Mammary epithelial cell (primary cell): ENCODE measurements at regions of chr5 and their contacts with region 1.

Region 1: DNA sequence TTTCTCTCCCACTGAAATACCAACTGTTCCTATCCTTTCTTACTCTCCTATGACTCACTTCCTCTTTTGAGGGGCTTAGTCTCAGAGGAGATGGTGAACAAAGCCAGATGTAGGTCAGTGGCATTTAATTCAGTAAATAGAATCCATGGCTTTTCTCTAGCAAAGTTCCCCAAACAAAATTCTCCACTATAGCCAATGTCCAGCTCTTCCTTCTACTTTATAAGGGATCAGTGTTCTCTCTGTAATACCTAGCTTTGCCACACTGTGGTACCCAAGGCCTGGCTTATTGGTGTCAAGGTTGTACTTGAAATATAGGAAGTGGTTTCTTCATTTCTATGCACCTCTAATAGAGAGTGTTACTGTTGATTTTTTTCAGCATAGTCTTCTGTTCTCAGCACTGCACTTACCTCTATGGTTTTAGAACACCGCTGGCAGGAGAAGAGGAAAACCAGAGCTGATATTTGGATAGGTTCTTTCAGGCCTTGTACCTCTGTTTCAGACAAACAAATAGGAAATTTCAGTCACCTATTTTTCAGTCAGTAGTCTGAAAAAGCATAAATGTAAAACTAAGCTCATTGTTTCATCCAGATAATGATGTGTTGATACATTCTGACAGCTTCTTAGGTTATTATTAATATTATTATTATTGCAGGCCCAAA is 40.6 kb upstream of the ITGA2 start:
- DNase-seq: peak; percentile 78
- H3K4me3 ChIP-seq: no peak overlapping the region
- H3K27ac ChIP-seq: peak overlapping the region; percentile 44
- H3K4me1 ChIP-seq: peaks cover 49% of the 10 kb centered on the region
- H3K27me3 ChIP-seq: no peaks in the 10 kb centered on the region
- CTCF ChIP-seq: peak; percentile 85 to 88

Region 2: DNA sequence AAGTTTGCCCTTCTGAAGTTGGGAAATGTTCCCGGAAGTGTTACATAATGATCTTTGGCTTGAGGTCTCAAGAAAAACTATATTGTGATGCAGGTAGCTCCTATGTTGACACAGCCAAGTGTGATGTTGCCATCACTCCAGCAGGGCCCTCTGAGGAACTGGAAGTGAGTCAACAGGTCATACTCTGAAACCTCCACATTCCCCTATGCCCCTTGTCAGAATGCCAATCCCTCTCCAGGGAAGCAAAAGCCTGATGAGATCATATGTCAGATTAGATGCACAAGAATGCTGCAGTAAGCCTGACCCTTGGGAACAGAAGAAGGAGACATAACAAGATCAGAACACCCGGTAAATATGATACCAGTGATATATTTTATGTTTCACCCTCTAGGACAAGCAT is 26.2 kb before region 1 on chr5:
- CTCF ChIA-PET with region 1: no interaction called
- dilution Hi-C with region 1: no loop called
- in situ Hi-C with region 1: no loop called
- intact Hi-C with region 1: loop called (anchors 1 kb)
- DNase-seq: peak; percentile 96
- H3K4me3 ChIP-seq: no peak overlapping the region
- H3K27ac ChIP-seq: peak overlapping the region; percentile 61
- H3K4me1 ChIP-seq: peaks cover 12% of the 10 kb centered on the region
- H3K27me3 ChIP-seq: no peaks in the 10 kb centered on the region
- CTCF ChIP-seq: no peak

Region 3: DNA sequence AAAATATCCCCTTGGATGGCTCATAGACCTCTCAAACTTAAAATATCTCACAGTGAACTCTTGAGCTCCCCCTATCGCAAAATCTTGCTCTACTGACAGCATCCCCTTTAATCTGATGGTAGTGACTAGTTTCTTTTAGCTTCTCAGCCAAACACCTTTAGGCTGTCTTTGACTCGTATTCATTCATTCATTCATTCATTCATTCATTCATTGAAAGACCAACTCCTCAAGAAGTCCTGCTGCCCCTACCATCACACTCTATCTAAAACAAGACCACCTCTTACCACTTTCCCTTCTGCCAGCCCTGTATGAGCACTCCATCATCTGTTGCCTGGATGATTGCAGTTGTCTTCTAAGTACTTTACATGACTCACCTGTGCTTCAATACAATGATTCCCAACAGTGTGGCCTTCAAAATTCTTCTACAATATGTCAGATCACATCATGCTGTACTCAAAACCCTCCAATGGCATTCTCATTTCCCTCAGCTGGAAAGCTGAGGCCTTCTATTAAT is 87.4 kb after region 1 on chr5:
- CTCF ChIA-PET with region 1: interaction called, 9 read pairs
- dilution Hi-C with region 1: no loop called
- in situ Hi-C with region 1: loop called (anchors 10 kb)
- intact Hi-C with region 1: loop called (anchors 2 kb)
- DNase-seq: peak; percentile 96
- H3K4me3 ChIP-seq: no peak overlapping the region
- H3K27ac ChIP-seq: peak overlapping the region; percentile 96
- H3K4me1 ChIP-seq: peaks cover 77% of the 10 kb centered on the region
- H3K27me3 ChIP-seq: no peaks in the 10 kb centered on the region
- CTCF ChIP-seq: peak; percentile 36 to 48

Region 4: GRCh38 chr5:53067641-53068040 is 119.1 kb after region 1 on chr5:
- CTCF ChIA-PET with region 1: no interaction called
- dilution Hi-C with region 1: no loop called
- in situ Hi-C with region 1: no loop called
- intact Hi-C with region 1: loop called (anchors 1 kb)
- DNase-seq: peak; percentile 45
- H3K4me3 ChIP-seq: no peak overlapping the region
- H3K27ac ChIP-seq: no peak overlapping the region
- H3K4me1 ChIP-seq: no peaks in the 10 kb centered on the region
- H3K27me3 ChIP-seq: no peaks in the 10 kb centered on the region
- CTCF ChIP-seq: no peak

Region 5: GRCh38 chr5:53095931-53096525 is 147.5 kb after region 1 on chr5:
- CTCF ChIA-PET with region 1: interaction called, 10 read pairs
- dilution Hi-C with region 1: loop called (anchors 5 kb)
- in situ Hi-C with region 1: loop called (anchors 10 kb)
- intact Hi-C with region 1: loop called (anchors 1 kb)
- DNase-seq: peak; percentile 37
- H3K4me3 ChIP-seq: no peak overlapping the region
- H3K27ac ChIP-seq: no peak overlapping the region
- H3K4me1 ChIP-seq: no peaks in the 10 kb centered on the region
- H3K27me3 ChIP-seq: no peaks in the 10 kb centered on the region
- CTCF ChIP-seq: peak; percentile 77 to 80

Region 6: DNA sequence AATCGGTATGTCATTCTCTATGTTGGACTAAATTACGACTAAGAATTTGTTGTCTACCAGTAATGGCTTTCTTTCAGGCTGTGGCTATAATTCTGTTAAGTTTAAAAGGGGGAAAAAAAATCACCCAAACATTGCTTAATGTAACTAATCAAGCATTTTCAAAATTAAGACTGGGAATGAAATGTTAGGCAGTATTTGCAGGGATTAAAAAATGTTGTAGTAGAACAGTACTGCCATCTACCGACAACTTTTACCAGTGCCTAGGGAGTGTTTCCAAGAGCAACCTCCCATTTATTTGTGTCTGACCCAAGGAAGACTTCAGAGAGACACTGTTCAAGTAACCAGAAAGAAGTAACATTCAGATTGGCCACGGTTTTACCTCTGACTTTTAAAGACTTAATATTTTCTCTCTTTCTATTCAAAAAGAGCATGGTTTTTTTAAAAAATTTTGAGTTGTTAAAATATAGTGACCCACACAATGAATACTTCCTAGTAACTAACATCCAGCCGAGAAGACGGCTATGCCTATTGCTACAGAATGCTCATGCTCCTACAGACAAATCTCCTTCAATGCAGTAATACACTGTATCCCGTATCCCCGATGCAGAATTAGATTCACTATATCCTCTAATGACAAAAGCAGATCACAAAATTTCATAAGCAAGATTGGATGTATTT is 1269.4 kb after region 1 on chr5:
- CTCF ChIA-PET with region 1: no interaction called
- dilution Hi-C with region 1: no loop called
- in situ Hi-C with region 1: loop called in 1 of 2 experiments (anchors 25 kb)
- intact Hi-C with region 1: no loop called
- DNase-seq: peak; percentile 42
- H3K4me3 ChIP-seq: no peak overlapping the region
- H3K27ac ChIP-seq: no peak overlapping the region
- H3K4me1 ChIP-seq: no peaks in the 10 kb centered on the region
- H3K27me3 ChIP-seq: no peaks in the 10 kb centered on the region
- CTCF ChIP-seq: peak; percentile 82 to 83